T-cell (primary cell): ENCODE measurements at regions of chr2 and their contacts with region 1.

Region 1: GRCh38 chr2:201231781-201232466 is 28.4 kb upstream of the CASP8 start:
- DNase-seq: peak; percentile 75 to 97 (median 88)
- ATAC-seq: peak; percentile 53 to 56 (median 54)
- H3K4me3 ChIP-seq: no peak overlapping the region
- H3K4me3 Mint-ChIP-seq: peak overlapping the region; percentile 57 to 94 (median 89)
- H3K27ac ChIP-seq: peak overlapping the region; percentile 81
- H3K27ac Mint-ChIP-seq: peak overlapping the region; percentile 72 to 93
- H3K4me1 ChIP-seq: peaks cover 40 to 43% of the 10 kb centered on the region in 2 experiments
- H3K4me1 Mint-ChIP-seq: peaks cover 44 to 60% (median 56%) of the 10 kb centered on the region in 3 donors
- H3K27me3 ChIP-seq: no peaks in the 10 kb centered on the region
- H3K27me3 Mint-ChIP-seq: no peaks in the 10 kb centered on the region

Region 2: GRCh38 chr2:200963124-200963917 is 268.6 kb before region 1 on chr2 and contains the start of gene ORC2:
- CTCF ChIA-PET with region 1: interaction called, 3 to 18 read pairs
- POLR2A ChIA-PET with region 1: no interaction called
- DNase-seq: peak; percentile 78 to 95 (median 90)
- ATAC-seq: peak; percentile 95 to 97 (median 96)
- H3K4me3 ChIP-seq: peak within 1 kb of the TSS; percentile 72 to 92
- H3K4me3 Mint-ChIP-seq: peak within 1 kb of the TSS; percentile 97 to 99 (median 98)
- H3K27ac ChIP-seq: peak within 1 kb of the TSS; percentile 78
- H3K27ac Mint-ChIP-seq: peak within 1 kb of the TSS; percentile 98 to 100
- H3K4me1 ChIP-seq: peaks cover 19 to 21% of the 10 kb centered on the region in 2 experiments
- H3K4me1 Mint-ChIP-seq: peaks cover 70 to 74% (median 71%) of the 10 kb centered on the region in 3 donors
- H3K27me3 ChIP-seq: no peaks in the 10 kb centered on the region
- H3K27me3 Mint-ChIP-seq: no peaks in the 10 kb centered on the region
- total RNA-seq, gene ORC2: 29.9 to 52.4 (median 50.6) TPM

Region 3: DNA sequence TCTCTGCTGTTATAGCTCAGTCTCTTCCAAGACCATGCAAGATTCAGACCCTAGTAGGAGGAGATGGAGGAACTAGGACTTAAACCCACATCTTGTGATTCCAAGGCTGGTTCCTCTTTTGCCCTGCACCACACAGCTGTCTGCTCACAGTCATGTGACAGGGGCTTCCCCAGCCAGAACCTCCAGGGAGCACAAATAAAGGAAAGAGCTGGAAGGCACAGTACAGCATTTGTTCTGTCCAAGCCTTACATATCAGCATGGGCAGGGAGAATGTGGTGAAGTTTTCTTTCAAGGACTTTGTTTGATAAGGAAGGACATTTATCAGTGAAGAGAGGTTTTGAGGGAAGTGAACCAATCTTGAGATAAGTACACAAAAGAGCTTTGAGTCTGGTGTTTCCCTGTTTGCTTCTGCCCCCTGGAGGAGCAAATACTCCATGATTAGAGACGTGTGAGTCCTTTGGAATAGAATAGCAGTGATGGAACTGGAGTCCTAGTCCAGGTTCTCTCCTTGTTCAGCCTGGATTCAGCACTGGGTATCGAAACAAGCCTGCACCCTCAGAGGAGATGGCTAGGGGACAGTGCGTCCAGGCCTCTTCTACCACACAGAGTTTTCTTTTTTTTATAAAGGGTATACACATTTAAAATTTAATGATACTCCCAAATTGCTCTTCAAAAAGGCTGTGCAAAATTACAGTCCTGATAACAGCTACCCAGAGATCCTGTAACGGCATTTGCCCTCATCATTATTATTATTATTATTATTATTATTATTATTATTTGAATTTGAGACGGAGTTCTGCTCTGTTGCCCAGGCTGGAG is 73.6 kb before region 1 on chr2:
- CTCF ChIA-PET with region 1: interaction called in 1 of 2 experiments, 23 read pairs
- POLR2A ChIA-PET with region 1: no interaction called
- DNase-seq: peak in 34 of 35 experiments; percentile 25 to 81 (median 58)
- ATAC-seq: peak; percentile 84 to 95 (median 86)
- H3K4me3 ChIP-seq: no peak overlapping the region
- H3K4me3 Mint-ChIP-seq: no peak overlapping the region
- H3K27ac ChIP-seq: peak overlapping the region; percentile 71
- H3K27ac Mint-ChIP-seq: peak overlapping the region; percentile 85 to 88
- H3K4me1 ChIP-seq: peaks cover 0 to 12% of the 10 kb centered on the region in 2 experiments
- H3K4me1 Mint-ChIP-seq: peaks cover 17 to 30% (median 18%) of the 10 kb centered on the region in 3 donors
- H3K27me3 ChIP-seq: no peaks in the 10 kb centered on the region
- H3K27me3 Mint-ChIP-seq: no peaks in the 10 kb centered on the region

Region 4: DNA sequence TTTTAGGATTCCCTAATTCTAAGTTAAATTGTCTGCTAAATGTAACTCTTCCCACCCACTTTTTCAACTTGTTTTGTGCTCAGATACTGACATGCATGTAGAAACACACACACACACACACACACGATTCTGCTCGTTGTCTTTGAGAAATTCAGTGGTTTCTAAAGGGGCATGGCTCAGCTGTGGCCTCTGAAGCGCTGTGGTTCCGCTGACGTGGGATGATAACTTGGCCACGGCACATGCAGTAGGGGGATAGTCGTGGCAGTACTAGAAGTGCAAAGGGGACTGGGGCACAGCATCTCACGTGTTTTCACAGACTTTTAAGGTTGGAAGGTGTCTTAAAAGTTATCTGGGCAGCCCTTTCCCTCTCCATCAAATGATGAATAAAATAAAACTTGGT is 30.6 kb before region 1 on chr2:
- CTCF ChIA-PET with region 1: interaction called, 10 to 68 read pairs
- POLR2A ChIA-PET with region 1: no interaction called
- DNase-seq: peak in 4 of 35 experiments; percentile 9 to 13 (median 12)
- ATAC-seq: no peak
- H3K4me3 ChIP-seq: no peak overlapping the region
- H3K4me3 Mint-ChIP-seq: no peak overlapping the region
- H3K27ac ChIP-seq: no peak overlapping the region
- H3K27ac Mint-ChIP-seq: peak overlapping the region; percentile 55 to 66
- H3K4me1 ChIP-seq: peaks cover 14 to 21% of the 10 kb centered on the region in 2 experiments
- H3K4me1 Mint-ChIP-seq: peaks cover 38 to 53% (median 46%) of the 10 kb centered on the region in 3 donors
- H3K27me3 ChIP-seq: no peaks in the 10 kb centered on the region
- H3K27me3 Mint-ChIP-seq: no peaks in the 10 kb centered on the region

Region 5: DNA sequence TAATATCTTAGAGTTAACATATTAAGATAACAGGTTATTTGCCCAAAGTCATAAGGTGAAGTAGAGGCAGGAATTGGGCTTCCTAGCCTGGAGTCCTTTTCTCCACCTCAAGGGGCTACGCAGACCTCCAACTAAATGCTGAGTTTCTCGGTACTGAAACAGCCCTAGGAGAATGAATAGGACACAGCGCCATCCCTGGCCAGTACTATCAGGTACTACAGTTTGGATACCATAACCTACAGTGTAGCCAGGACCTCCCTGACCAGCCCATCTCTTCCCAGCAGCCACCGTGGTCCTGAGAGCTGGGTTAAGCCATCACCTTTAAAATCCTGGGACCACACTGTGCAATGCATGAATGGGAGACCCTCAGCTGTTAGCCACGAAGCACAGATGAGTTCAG is 44.1 kb after region 1 on chr2:
- CTCF ChIA-PET with region 1: interaction called, 9 to 15 read pairs
- POLR2A ChIA-PET with region 1: interaction called in 1 of 2 experiments, 9 read pairs
- DNase-seq: peak in 1 of 35 experiments; percentile 51
- ATAC-seq: peak in 2 of 4 experiments; percentile 28 to 43
- H3K4me3 ChIP-seq: no peak overlapping the region
- H3K4me3 Mint-ChIP-seq: no peak overlapping the region
- H3K27ac ChIP-seq: no peak overlapping the region
- H3K27ac Mint-ChIP-seq: peak overlapping the region in 1 of 2 donors; percentile 28
- H3K4me1 ChIP-seq: peaks cover 0 to 19% of the 10 kb centered on the region in 2 experiments
- H3K4me1 Mint-ChIP-seq: peaks cover 65 to 71% (median 70%) of the 10 kb centered on the region in 3 donors
- H3K27me3 ChIP-seq: no peaks in the 10 kb centered on the region
- H3K27me3 Mint-ChIP-seq: no peaks in the 10 kb centered on the region

Region 6: DNA sequence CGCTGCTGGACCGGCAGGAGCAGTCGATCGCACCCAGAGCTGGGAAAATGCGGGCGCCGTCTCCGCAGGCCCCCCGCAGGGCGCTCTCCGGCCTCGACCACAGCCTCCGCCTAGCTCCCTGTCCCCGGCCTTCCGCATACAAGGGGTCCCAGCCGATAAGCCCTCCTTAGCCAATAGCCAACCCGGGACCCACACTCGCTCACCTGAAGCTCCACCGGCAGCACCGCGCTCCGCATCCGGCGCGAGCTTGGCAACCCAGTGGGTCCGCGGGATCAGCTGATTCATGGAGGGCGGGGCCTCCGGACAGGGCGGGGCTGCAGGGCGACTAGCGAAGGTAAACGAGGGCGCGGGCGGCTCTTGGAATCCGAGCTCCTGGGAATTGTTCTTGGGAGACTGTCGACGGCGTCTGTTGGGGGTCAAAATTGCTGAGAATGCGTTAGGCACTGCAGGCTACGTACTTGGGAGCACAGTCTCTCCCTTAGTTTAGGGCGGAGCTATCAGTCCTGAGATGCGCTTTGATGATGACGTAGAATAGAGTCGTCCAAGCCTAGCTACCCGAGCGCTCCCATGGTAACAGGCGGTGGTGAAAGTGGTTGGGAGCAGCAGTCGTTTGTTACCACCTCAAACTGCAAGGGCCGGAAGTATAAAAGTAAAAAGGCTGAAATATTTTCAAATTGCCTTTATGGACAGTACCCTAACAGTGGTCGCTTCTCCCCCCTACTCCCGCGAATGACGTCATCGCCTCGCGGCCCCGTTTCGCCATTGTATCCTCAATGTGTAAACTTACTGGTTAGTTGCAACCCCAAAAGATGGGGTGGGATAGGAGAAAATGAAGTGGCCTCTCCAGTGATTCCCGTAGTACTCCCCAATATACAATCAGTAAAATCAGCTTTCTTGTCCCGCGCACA is 549.0 kb after region 1 on chr2 and contains the start of gene ALS2:
- CTCF ChIA-PET with region 1: interaction called in 1 of 2 experiments, 11 read pairs
- POLR2A ChIA-PET with region 1: no interaction called
- DNase-seq: peak; percentile 87 to 97 (median 93)
- ATAC-seq: peak; percentile 92 to 96 (median 96)
- H3K4me3 ChIP-seq: peak within 1 kb of the TSS; percentile 81 to 97
- H3K4me3 Mint-ChIP-seq: peak within 1 kb of the TSS; percentile 89 to 97 (median 90)
- H3K27ac ChIP-seq: peak within 1 kb of the TSS; percentile 77
- H3K27ac Mint-ChIP-seq: peak within 1 kb of the TSS; percentile 93
- H3K4me1 ChIP-seq: peaks cover 14% of the 10 kb centered on the region in 2 experiments
- H3K4me1 Mint-ChIP-seq: peaks cover 21 to 27% (median 24%) of the 10 kb centered on the region in 3 donors
- H3K27me3 ChIP-seq: no peaks in the 10 kb centered on the region
- H3K27me3 Mint-ChIP-seq: no peaks in the 10 kb centered on the region
- total RNA-seq, gene ALS2: 9.1 to 11.9 (median 10.3) TPM